Activated naive CD4-positive, alpha-beta T cell treated with anti-CD3 and anti-CD28 coated beads, Interleukin-2, amount 10 ng/mL, durations not matched to agents 7 days and 5 days (primary cell): ENCODE measurements at regions of chr10 and their contacts with region 1.

Region 1: GRCh38 chr10:87850742-87851205 is 12.6 kb downstream of the KLLN start:
- DNase-seq: peak; percentile 70
- H3K4me3 Mint-ChIP-seq: no peak overlapping the region
- H3K27ac Mint-ChIP-seq: no peak overlapping the region
- H3K4me1 Mint-ChIP-seq: peaks cover 15% of the 10 kb centered on the region
- H3K27me3 Mint-ChIP-seq: no peaks in the 10 kb centered on the region

Region 2: GRCh38 chr10:87598700-87599099 is 252.1 kb before region 1 on chr10:
- CTCF ChIA-PET with region 1: no interaction called
- DNase-seq: no peak
- H3K4me3 Mint-ChIP-seq: no peak overlapping the region
- H3K27ac Mint-ChIP-seq: no peak overlapping the region
- H3K4me1 Mint-ChIP-seq: peaks cover 6% of the 10 kb centered on the region
- H3K27me3 Mint-ChIP-seq: peaks cover 12% of the 10 kb centered on the region

Region 3: GRCh38 chr10:88553116-88553752 is 702.5 kb after region 1 on chr10:
- CTCF ChIA-PET with region 1: interaction called, 31 read pairs
- DNase-seq: peak; percentile 57
- H3K4me3 Mint-ChIP-seq: no peak overlapping the region
- H3K27ac Mint-ChIP-seq: no peak overlapping the region
- H3K4me1 Mint-ChIP-seq: no peaks in the 10 kb centered on the region
- H3K27me3 Mint-ChIP-seq: no peaks in the 10 kb centered on the region